H1 (cell line): ENCODE measurements at regions of chr10 and their contacts with region 1.

Region 1: DNA sequence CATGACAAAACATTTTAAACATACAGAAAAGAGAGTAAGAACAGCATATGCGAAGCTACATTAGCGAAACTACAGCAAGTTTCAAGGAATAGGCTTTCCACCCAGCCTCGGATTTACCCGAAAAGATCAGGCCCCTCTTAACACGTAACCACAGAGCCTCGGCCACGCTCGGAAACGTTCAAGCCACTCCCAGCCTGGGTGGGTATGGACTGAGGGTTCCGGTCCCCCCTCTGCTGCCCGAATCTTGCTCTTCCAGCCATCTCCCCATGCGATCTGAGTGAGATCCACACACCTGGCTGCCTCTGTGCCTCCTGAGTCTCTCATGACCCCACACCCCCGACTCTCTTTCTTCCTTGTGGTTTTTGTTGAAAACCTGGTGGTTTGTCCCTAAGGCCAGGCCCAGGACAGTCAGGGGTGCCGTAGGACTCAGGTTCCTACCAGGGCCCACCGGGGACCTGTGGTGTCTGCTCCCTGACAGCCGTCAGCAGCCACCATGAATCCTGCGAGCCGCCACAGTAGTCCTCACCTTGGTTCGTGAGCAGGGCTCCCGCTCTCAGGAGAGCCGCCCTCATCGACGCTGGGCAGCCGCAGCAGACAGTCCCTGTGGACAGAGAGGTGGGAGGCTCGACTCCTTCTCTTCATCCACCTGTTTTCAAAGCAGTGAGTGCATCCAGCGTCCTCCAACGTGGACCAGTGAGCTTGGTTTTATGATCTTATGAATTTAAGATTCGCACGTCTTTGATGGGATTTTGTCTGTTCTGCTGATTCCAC is 18.5 kb downstream of the KNDC1 start:
- DNase-seq: no peak
- H3K4me3 ChIP-seq: no peak overlapping the region
- H3K27ac ChIP-seq: no peak overlapping the region
- H3K4me1 ChIP-seq: no peaks in the 10 kb centered on the region
- H3K27me3 ChIP-seq: no peaks in the 10 kb centered on the region
- CTCF ChIP-seq: no peak
- EP300 ChIP-seq: no peak
- POLR2A ChIP-seq: no peak
- RAD21 ChIP-seq: no peak

Region 2: DNA sequence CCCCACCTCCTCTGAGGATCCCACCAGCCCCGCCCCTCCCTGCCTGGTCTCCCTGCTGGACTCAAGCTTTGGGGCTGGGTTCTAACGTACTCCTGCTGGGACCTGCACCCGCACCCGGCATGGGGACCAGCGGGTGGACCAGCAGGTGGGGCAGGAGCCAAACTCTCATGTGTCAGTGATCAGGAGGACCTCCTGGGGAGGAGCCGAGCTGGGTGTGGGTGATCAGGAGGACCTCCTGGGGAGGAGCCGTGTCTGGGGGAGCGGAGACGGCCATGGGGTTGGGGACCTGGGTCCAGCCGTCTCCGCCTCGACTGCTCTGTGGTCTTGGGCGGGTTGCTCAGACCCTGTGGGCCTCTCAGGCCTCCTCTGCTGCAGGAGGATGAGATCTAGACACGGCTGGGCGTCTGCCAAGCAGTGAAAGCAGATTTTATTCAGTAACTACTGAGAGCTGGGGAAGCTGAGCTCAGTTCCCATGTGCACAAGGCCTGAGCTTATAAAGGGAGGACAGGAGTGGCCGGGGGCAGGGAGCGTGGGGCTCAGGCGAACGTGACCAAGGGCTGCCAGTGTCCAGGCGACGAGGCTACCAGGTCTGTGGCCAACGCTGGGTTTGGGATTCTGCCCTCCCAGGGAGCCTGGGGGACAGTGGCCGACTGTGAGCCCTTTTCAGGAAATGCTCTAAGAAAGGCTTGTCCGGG is 17.8 kb after region 1 on chr10:
- CTCF ChIA-PET with region 1: interaction called, 6 read pairs
- POLR2A ChIA-PET with region 1: interaction called, 10 read pairs
- DNase-seq: no peak
- H3K4me3 ChIP-seq: no peak overlapping the region
- H3K27ac ChIP-seq: no peak overlapping the region
- H3K4me1 ChIP-seq: no peaks in the 10 kb centered on the region
- H3K27me3 ChIP-seq: no peaks in the 10 kb centered on the region
- CTCF ChIP-seq: no peak
- EP300 ChIP-seq: no peak
- POLR2A ChIP-seq: no peak
- RAD21 ChIP-seq: no peak